Natural killer cell (primary cell): ENCODE measurements at regions of chr6 and their contacts with region 1.

Region 1: GRCh38 chr6:30515932-30516753 is 26.8 kb downstream of the HLA-E start:
- DNase-seq: peak; percentile 76 to 97
- ATAC-seq: peak; percentile 88 to 93 (median 88)
- H3K4me3 ChIP-seq: peak overlapping the region; percentile 47
- H3K4me3 Mint-ChIP-seq: peak overlapping the region; percentile 89
- H3K27ac ChIP-seq: peak overlapping the region; percentile 94
- H3K27ac Mint-ChIP-seq: peak overlapping the region; percentile 93 to 96
- H3K4me1 ChIP-seq: peaks cover 46% of the 10 kb centered on the region
- H3K4me1 Mint-ChIP-seq: peaks cover 37 to 38% of the 10 kb centered on the region in 2 donors
- H3K27me3 ChIP-seq: no peaks in the 10 kb centered on the region
- H3K27me3 Mint-ChIP-seq: no peaks in the 10 kb centered on the region
- CTCF ChIP-seq: no peak

Region 2: GRCh38 chr6:30533460-30534294 is 17.5 kb after region 1 on chr6:
- intact Hi-C with region 1: loop called (anchors 2 kb)
- DNase-seq: peak in 1 of 2 donors; percentile 66
- ATAC-seq: peak in 1 of 3 donors; percentile 50
- H3K4me3 ChIP-seq: no peak overlapping the region
- H3K4me3 Mint-ChIP-seq: peak overlapping the region; percentile 68
- H3K27ac ChIP-seq: no peak overlapping the region
- H3K27ac Mint-ChIP-seq: peak overlapping the region; percentile 14 to 80
- H3K4me1 ChIP-seq: peaks cover 26% of the 10 kb centered on the region
- H3K4me1 Mint-ChIP-seq: peaks cover 12 to 17% of the 10 kb centered on the region in 2 donors
- H3K27me3 ChIP-seq: no peaks in the 10 kb centered on the region
- H3K27me3 Mint-ChIP-seq: no peaks in the 10 kb centered on the region
- CTCF ChIP-seq: no peak

Region 3: GRCh38 chr6:30887901-30888815 is 372.0 kb after region 1 on chr6:
- intact Hi-C with region 1: no loop called
- DNase-seq: no peak
- ATAC-seq: no peak
- H3K4me3 ChIP-seq: no peak overlapping the region
- H3K4me3 Mint-ChIP-seq: no peak overlapping the region
- H3K27ac ChIP-seq: no peak overlapping the region
- H3K27ac Mint-ChIP-seq: no peak overlapping the region
- H3K4me1 ChIP-seq: peaks cover 16% of the 10 kb centered on the region
- H3K4me1 Mint-ChIP-seq: peaks cover 16 to 27% of the 10 kb centered on the region in 2 donors
- H3K27me3 ChIP-seq: peaks cover 6% of the 10 kb centered on the region
- H3K27me3 Mint-ChIP-seq: peaks cover 7 to 31% of the 10 kb centered on the region in 2 donors
- CTCF ChIP-seq: no peak